ENCODE measurements at regions of chr6 and their contacts with region 1.

Region 1: GRCh38 chr6:97626671-97627441 is 343.8 kb upstream of the MMS22L start:
- DNase-seq: peak in 1 of 10 donors; percentile 13
- H3K4me3 ChIP-seq: peak overlapping the region; percentile 13 to 74 (median 52)
- H3K27ac ChIP-seq: peak overlapping the region in 56 of 59 donors; percentile 6 to 90 (median 70)
- H3K27me3 ChIP-seq: no peaks in the 10 kb centered on the region
- CTCF ChIP-seq: no peak

Region 2: GRCh38 chr6:97669191-97670031 is 42.6 kb after region 1 on chr6:
- intact Hi-C with region 1: loop called in 1 of 2 experiments (anchors 5 kb)
- DNase-seq: peak; percentile 12 to 72 (median 58)
- H3K4me3 ChIP-seq: peak overlapping the region; percentile 28 to 74 (median 60)
- H3K27ac ChIP-seq: peak overlapping the region in 57 of 59 donors; percentile 17 to 85 (median 73)
- H3K27me3 ChIP-seq: no peaks in the 10 kb centered on the region
- CTCF ChIP-seq: no peak

Measured in dorsolateral prefrontal cortex (tissue), 120 donors.